ENCODE measurements at regions of chr14 and their contacts with region 1.

Region 1: DNA sequence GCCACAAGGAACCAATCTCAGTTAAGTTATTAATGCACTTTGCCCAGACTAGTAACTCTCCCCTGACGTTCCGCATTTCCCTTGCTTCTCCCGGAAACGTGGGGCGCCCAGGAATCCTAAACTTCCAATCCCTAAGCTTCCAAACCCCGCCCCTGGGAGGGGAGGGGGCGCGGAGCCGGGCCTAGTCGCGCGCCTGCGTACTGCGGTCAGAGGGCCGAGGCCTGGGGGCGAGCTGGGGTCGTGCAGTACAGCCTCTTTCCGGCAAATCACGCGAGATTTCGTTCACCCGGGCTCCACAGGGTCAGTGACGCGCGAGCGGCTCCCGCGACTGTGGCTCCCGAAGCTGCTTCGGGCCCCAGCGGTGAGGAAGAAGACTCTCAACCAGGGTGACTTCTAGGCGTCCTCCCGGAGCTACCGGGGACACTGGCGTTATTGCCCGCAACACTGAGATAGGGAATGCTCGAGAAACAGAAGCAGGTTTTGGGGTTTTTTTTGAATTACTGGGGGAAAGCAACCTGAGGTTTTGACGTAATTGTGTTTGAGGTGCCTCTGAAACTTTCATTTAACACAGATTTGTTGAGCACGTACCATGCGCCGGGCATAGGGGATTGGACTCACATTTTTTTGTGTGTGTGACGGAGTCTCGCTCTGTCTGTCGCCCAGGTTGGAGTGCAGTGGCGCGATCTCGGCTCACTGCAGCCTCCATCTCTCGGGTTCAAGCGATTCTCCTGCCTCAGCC is at the start of gene PTGR2:
- DNase-seq: peak; percentile 69 to 95 (median 89)
- ATAC-seq: peak; percentile 93 to 95 (median 94)
- H3K4me3 ChIP-seq: peak within 1 kb of the TSS; percentile 67 to 94
- H3K4me3 Mint-ChIP-seq: peak within 1 kb of the TSS; percentile 95 to 97 (median 96)
- H3K27ac ChIP-seq: peak within 1 kb of the TSS; percentile 84
- H3K27ac Mint-ChIP-seq: peak within 1 kb of the TSS; percentile 96 to 97
- H3K4me1 ChIP-seq: peaks cover 3 to 16% of the 10 kb centered on the region in 2 experiments
- H3K4me1 Mint-ChIP-seq: peaks cover 19 to 23% (median 21%) of the 10 kb centered on the region in 3 donors
- H3K27me3 ChIP-seq: no peaks in the 10 kb centered on the region
- H3K27me3 Mint-ChIP-seq: no peaks in the 10 kb centered on the region
- total RNA-seq, gene PTGR2: 1.3 to 3.5 (median 2.9) TPM

Region 2: GRCh38 chr14:73825551-73826188 is 26.1 kb before region 1 on chr14:
- CTCF ChIA-PET with region 1: no interaction called
- POLR2A ChIA-PET with region 1: interaction called, 4 to 11 read pairs
- DNase-seq: peak; percentile 34 to 87 (median 73)
- ATAC-seq: peak; percentile 94 to 99 (median 98)
- H3K4me3 ChIP-seq: no peak overlapping the region
- H3K4me3 Mint-ChIP-seq: no peak overlapping the region
- H3K27ac ChIP-seq: no peak overlapping the region
- H3K27ac Mint-ChIP-seq: peak overlapping the region in 1 of 2 donors; percentile 44
- H3K4me1 ChIP-seq: no peaks in the 10 kb centered on the region
- H3K4me1 Mint-ChIP-seq: peaks cover 5 to 10% (median 5%) of the 10 kb centered on the region in 3 donors
- H3K27me3 ChIP-seq: no peaks in the 10 kb centered on the region
- H3K27me3 Mint-ChIP-seq: no peaks in the 10 kb centered on the region

Region 3: GRCh38 chr14:74267588-74267987 is 415.8 kb after region 1 on chr14:
- CTCF ChIA-PET with region 1: no interaction called
- POLR2A ChIA-PET with region 1: no interaction called
- DNase-seq: no peak
- ATAC-seq: no peak
- H3K4me3 ChIP-seq: no peak overlapping the region
- H3K4me3 Mint-ChIP-seq: no peak overlapping the region
- H3K27ac ChIP-seq: no peak overlapping the region
- H3K27ac Mint-ChIP-seq: no peak overlapping the region
- H3K4me1 ChIP-seq: no peaks in the 10 kb centered on the region
- H3K4me1 Mint-ChIP-seq: no peaks in the 10 kb centered on the region
- H3K27me3 ChIP-seq: peaks cover 0 to 23% of the 10 kb centered on the region in 2 experiments
- H3K27me3 Mint-ChIP-seq: peaks cover 9 to 19% of the 10 kb centered on the region in 2 donors

Measured in T-cell (primary cell).